AG04450 (cell line): ENCODE measurements at regions of chr1 and their contacts with region 1.

Region 1: DNA sequence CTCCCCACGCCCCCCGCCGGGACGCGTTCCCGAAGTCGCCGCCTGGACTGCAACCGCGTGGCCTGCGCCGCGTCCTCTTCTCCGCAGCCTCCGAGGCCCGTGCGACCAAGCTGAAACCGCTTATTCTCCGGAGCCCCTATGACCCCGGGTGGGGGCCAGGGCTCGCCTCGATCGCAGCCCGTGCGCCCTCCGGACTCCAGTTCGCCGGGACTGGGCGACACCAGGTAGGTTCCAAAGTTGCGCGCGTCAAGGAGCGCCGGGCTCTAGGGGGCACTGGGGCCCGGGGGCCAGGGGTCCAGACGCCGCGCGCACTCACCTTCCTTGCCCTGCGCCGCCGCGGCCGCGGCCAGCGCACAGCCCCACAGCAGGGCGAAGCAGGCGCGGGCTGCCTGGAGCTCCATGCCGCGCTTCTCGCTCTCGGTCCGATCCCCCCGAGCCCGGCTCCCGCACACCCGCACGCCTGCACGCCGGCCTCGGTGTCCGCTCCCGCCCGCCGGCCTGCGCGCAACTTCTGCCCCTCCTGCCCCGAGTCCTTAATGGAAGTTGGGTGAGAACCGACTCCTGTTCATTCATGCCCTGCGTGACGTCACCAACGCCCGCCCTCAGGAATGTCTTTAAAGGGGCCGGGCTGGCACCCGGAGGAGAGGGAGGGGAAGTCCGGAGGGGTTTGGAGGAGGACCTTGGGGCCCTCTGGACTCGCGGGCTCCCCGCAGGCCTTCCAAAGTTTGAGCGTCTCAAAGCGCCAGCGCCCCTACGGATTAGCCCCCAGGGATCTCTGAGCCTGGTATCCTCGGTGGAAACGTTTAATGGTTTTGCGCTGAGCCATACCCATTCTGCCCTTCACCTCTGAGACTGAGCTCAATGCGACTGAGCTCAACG is at the start of gene EPHA2:
- DNase-seq: peak; percentile 55
- H3K4me3 ChIP-seq: peak within 1 kb of the TSS; percentile 88
- H3K27ac ChIP-seq: peak within 1 kb of the TSS; percentile 80
- H3K27me3 ChIP-seq: no peaks in the 10 kb centered on the region
- CTCF ChIP-seq: no peak
- polyA plus RNA-seq, gene EPHA2: 19.1 and 26.0 TPM in 2 replicates

Region 2: GRCh38 chr1:15523104-15524020 is 632.4 kb before region 1 on chr1:
- CTCF ChIA-PET with region 1: no interaction called
- POLR2A ChIA-PET with region 1: interaction called, 12 read pairs
- DNase-seq: no peak
- H3K4me3 ChIP-seq: peak overlapping the region; percentile 73
- H3K27ac ChIP-seq: peak overlapping the region; percentile 68
- H3K27me3 ChIP-seq: no peaks in the 10 kb centered on the region
- CTCF ChIP-seq: no peak

Region 3: DNA sequence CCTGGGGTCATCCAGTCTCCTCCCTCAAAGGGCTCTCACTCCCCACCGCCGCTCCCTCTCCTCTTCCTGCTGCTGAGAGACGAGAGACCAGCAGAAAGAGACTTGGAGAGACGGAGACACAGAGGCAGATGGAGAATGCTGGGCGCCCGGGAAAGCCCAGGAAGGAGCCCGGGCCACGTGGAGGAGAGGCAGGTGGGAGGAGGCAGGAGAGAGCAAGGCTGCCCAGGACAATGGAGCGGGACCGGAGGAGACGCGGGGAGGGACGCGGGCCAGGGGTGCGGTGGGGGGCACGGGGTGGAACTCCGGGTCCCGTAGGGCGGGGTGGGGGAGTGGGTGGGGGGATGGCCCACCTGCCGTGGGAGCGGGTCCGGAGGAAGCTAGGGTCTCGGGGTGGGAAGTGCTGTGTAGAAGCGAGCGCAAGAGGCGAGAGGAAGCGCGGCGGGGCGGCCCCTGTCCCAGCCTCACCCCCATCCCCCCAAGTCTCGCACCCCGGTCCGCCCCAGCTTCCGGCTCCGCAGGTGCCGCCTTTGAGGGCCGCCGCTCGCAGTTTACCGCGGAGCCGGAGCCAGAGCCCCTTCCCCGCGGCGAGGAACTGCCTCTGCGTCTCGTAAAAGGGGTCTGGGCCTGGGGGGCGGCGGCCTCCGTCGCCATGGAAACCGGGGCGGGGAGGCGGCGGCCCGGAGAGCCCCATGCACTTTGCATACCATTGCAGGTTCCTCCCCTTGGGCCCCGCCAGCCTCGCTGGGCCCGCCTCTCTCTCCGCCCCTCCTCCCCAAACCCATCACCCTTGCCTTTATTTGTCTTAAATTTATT is 11.8 kb after region 1 on chr1:
- CTCF ChIA-PET with region 1: interaction called, 13 read pairs
- POLR2A ChIA-PET with region 1: interaction called, 11 read pairs
- DNase-seq: no peak
- H3K4me3 ChIP-seq: peak overlapping the region; percentile 53
- H3K27ac ChIP-seq: no peak overlapping the region
- H3K27me3 ChIP-seq: no peaks in the 10 kb centered on the region
- CTCF ChIP-seq: no peak

Region 4: DNA sequence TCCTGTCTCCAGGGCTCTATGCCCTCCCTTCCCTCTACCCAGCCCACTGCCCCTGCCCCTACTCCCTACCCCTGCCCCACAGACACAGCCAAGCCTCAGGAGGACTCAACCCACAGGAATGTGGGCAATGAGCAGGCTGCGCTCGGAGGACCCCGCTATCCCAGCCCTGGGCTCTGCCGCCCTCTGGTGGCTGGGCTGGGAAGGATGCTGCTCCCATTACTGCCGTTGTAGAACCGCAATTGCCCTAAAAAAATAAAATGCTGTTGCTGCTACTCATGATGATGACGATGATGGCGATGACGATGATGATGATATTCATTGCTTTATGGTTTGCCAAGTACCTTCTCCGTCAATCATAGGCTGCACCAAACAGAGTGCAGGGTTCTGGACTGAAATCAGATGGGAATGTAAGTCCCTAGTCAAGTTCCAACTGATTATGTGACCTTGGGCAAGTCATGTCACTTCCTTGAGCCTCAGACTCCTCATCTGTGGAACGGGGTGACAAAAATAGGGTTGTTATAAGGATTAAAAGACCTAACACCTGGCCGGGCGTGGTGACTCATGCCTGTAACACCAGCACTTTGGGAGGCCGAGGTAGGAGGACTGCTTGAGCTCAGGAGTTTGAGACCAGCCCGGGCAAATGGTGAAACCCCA is 32.1 kb after region 1 on chr1:
- CTCF ChIA-PET with region 1: interaction called, 21 read pairs
- POLR2A ChIA-PET with region 1: no interaction called
- DNase-seq: peak; percentile 58
- H3K4me3 ChIP-seq: no peak overlapping the region
- H3K27ac ChIP-seq: no peak overlapping the region
- H3K27me3 ChIP-seq: no peaks in the 10 kb centered on the region
- CTCF ChIP-seq: peak; percentile 98

Region 5: GRCh38 chr1:16212251-16212961 is 56.6 kb after region 1 on chr1 and contains the start of gene ARHGEF19:
- CTCF ChIA-PET with region 1: no interaction called
- POLR2A ChIA-PET with region 1: no interaction called
- DNase-seq: no peak
- H3K4me3 ChIP-seq: no peak within 1 kb of the TSS
- H3K27ac ChIP-seq: no peak within 1 kb of the TSS
- H3K27me3 ChIP-seq: peaks cover 5% of the 10 kb centered on the region
- CTCF ChIP-seq: no peak
- polyA plus RNA-seq, gene ARHGEF19: 6.7 and 9.5 TPM in 2 replicates